ENCODE measurements at regions of chr13 and their contacts with region 1.

Region 1: DNA sequence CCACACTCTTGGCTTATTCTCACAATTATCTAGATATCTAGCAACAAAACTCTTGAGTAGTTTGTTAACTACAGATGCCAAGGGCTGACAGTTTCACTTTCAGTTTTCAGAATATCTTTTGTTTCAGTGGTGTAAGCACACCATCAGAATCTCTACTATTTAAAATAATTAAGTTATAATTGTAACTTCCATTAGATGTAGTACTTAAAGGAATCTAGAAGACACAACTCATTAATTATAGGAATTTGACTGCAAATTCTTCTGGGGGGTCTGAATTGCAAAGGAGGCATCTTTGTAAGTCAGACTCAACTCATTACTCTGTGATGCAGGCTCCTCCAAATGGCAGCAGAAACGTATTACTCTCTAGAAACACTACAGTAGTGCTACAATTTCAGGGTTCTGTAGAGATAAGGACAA is 44.9 kb upstream of the USPL1 start:
- DNase-seq: peak in 5 of 14 experiments; percentile 9 to 67 (median 63)
- ATAC-seq: peak; percentile 55
- H3K4me3 ChIP-seq: peak overlapping the region; percentile 44
- H3K4me3 Mint-ChIP-seq: peak overlapping the region; percentile 82
- H3K27ac ChIP-seq: peak overlapping the region; percentile 16 to 38
- H3K27ac Mint-ChIP-seq: peak overlapping the region; percentile 95
- H3K4me1 ChIP-seq: peaks cover 15% of the 10 kb centered on the region
- H3K4me1 Mint-ChIP-seq: peaks cover 37% of the 10 kb centered on the region
- H3K27me3 ChIP-seq: no peaks in the 10 kb centered on the region
- H3K27me3 Mint-ChIP-seq: no peaks in the 10 kb centered on the region
- CTCF ChIP-seq: peak; percentile 31

Region 2: GRCh38 chr13:29508130-29508875 is 1064.6 kb before region 1 on chr13:
- CTCF ChIA-PET with region 1: no interaction called
- POLR2A ChIA-PET with region 1: no interaction called
- intact Hi-C with region 1: loop called in 1 of 2 experiments (anchors 10 kb)
- DNase-seq: peak; percentile 49 to 83 (median 68)
- ATAC-seq: peak; percentile 75
- H3K4me3 ChIP-seq: no peak overlapping the region
- H3K4me3 Mint-ChIP-seq: no peak overlapping the region
- H3K27ac ChIP-seq: no peak overlapping the region
- H3K27ac Mint-ChIP-seq: no peak overlapping the region
- H3K4me1 ChIP-seq: no peaks in the 10 kb centered on the region
- H3K4me1 Mint-ChIP-seq: no peaks in the 10 kb centered on the region
- H3K27me3 ChIP-seq: no peaks in the 10 kb centered on the region
- H3K27me3 Mint-ChIP-seq: peaks cover 11% of the 10 kb centered on the region
- CTCF ChIP-seq: peak; percentile 88

Region 3: GRCh38 chr13:30408319-30409101 is 164.4 kb before region 1 on chr13:
- CTCF ChIA-PET with region 1: no interaction called
- POLR2A ChIA-PET with region 1: no interaction called
- intact Hi-C with region 1: loop called in 1 of 2 experiments (anchors 10 kb)
- DNase-seq: peak; percentile 83 to 96 (median 88)
- ATAC-seq: peak; percentile 91
- H3K4me3 ChIP-seq: peak overlapping the region; percentile 37
- H3K4me3 Mint-ChIP-seq: peak overlapping the region; percentile 76
- H3K27ac ChIP-seq: peak overlapping the region in 1 of 2 donors; percentile 76
- H3K27ac Mint-ChIP-seq: peak overlapping the region; percentile 78
- H3K4me1 ChIP-seq: peaks cover 20% of the 10 kb centered on the region
- H3K4me1 Mint-ChIP-seq: peaks cover 40% of the 10 kb centered on the region
- H3K27me3 ChIP-seq: no peaks in the 10 kb centered on the region
- H3K27me3 Mint-ChIP-seq: no peaks in the 10 kb centered on the region
- CTCF ChIP-seq: peak; percentile 63

Region 4: DNA sequence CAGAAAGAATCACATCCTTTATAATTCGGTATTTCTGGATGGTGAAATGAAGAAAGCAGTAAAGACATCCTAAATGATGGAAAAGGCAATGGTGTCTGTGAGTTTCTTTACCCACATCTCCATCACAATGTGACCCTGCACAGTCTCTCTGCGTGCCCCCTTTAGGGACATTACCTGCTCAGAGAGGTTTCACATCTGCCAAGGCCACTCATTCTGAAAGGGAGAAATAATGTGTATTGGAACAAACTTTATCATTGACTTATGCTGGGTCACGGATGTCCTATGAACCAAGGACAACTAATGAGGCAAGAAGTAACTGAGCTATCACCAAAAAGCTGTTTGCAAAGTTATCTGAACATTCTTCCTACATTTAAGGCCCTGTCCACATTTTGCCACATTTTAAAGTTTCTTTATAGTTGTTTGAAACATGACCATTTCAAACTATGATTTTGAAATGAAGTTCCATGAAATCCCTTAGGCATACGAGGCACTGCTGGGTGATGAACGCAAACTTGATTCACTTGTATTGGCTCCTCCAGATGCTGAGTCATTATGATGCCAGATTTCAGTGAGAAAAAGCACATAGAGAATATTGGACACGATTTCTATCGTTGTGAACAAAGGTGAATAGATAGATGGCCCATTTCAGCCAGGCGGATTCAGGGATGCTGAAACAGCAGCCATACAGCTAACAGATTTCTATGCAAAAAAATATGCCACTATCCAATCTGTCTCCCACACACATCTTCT is 43.6 kb before region 1 on chr13:
- CTCF ChIA-PET with region 1: no interaction called
- POLR2A ChIA-PET with region 1: no interaction called
- intact Hi-C with region 1: loop called in 1 of 2 experiments (anchors 10 kb)
- DNase-seq: no peak
- ATAC-seq: no peak
- H3K4me3 ChIP-seq: no peak overlapping the region
- H3K4me3 Mint-ChIP-seq: no peak overlapping the region
- H3K27ac ChIP-seq: no peak overlapping the region
- H3K27ac Mint-ChIP-seq: no peak overlapping the region
- H3K4me1 ChIP-seq: no peaks in the 10 kb centered on the region
- H3K4me1 Mint-ChIP-seq: peaks cover 12% of the 10 kb centered on the region
- H3K27me3 ChIP-seq: no peaks in the 10 kb centered on the region
- H3K27me3 Mint-ChIP-seq: no peaks in the 10 kb centered on the region
- CTCF ChIP-seq: no peak

Region 5: DNA sequence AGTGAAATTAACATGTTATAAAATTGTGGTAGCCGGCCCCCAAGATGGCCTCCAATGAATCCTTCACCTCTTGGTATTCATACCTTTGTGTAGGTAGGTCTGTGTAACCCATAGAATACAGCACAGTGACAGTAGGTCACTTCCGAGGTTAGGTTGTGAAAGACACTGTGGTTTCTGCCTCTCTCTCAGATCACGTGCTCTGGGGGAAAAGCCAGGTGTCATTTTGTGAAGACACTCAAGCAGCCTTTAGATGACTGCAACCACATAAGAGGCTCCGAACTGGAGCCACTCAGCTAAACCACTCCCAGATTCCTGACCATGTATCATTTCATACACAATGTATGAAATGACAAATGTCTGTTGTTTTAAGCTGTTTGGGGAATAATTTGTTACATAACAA is 35.0 kb after region 1 on chr13:
- CTCF ChIA-PET with region 1: no interaction called
- POLR2A ChIA-PET with region 1: no interaction called
- intact Hi-C with region 1: loop called in 1 of 2 experiments (anchors 5 kb)
- DNase-seq: peak; percentile 34 to 93 (median 50)
- ATAC-seq: peak; percentile 98
- H3K4me3 ChIP-seq: no peak overlapping the region
- H3K4me3 Mint-ChIP-seq: peak overlapping the region; percentile 54
- H3K27ac ChIP-seq: peak overlapping the region in 1 of 2 donors; percentile 25
- H3K27ac Mint-ChIP-seq: peak overlapping the region; percentile 92
- H3K4me1 ChIP-seq: peaks cover 14% of the 10 kb centered on the region
- H3K4me1 Mint-ChIP-seq: peaks cover 50% of the 10 kb centered on the region
- H3K27me3 ChIP-seq: no peaks in the 10 kb centered on the region
- H3K27me3 Mint-ChIP-seq: no peaks in the 10 kb centered on the region
- CTCF ChIP-seq: no peak

Measured in CD4-positive, alpha-beta T cell (primary cell).